Cardiac septum (tissue), 1 donor: ENCODE measurements at regions of chr10 and their contacts with region 1.

Region 1: DNA sequence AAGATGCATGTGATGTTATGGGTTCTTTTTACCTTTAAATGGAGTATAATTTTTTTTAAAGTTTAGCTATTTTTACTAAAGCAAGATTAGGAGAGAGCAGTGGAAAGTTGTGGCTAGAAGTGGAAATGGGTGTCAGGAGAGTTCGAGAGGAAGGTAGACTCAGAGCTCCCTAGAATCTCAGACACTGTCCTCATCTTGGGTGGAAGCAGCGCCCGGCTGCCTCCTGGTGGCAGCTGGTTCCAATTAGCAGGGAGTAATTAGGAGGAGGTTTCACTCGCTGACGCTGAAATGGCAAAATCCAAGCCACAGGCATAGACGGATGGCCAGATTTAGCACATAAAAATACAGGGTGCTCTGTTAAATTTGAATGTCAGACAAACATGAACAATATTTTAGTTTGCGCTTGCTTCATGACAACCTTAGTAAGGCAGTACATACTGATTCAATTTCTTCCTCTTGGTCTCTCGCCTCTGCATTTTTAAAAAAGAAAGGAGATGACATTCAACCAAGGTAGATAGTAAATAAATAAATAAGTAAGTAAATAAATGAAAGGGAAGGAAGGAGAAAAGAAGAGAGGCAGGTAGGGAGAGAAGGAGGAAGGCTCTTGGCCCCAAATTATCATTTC is 58.5 kb downstream of the LGI1 start:
- DNase-seq: no peak

Region 2: DNA sequence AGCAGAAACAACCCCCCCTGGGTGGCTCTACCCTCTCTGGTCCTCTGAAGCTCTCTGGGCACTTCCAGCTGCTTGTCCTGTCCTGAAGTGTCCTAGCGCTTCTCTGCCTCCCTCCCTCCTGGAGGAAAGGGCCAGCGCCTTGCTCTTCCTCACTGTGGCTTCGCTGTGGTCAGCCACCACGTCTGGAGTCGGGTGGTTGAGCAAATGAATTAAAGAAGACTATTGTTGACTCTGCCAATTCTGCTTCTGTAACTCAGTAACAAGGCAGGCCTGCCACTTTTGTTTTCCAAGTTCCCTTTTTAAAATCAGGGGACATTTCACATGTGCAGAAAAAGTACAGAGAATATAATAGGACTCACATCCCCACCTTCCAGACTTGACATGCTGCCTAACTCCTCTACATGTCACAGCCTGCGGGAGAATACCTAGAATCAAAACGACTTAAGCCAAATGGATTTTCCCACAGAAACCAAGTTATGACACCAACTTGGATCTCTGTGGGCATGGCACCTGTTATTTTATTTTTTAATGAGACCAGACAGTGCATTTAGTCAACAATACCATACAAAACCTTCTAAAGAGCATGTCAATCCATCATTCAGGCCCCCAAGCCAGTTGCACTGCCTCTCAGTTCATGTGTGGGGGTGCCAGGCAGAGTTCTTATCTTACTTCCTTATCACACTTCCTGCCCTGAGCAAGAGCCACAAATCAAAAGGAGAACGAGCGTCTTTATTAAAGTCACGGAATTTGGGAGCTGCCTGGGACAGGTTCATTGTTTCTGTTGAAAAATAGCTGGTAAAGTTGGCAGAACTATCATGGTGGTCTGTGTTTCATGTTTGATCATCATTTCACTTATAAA is 243.0 kb before region 1 on chr10:
- intact Hi-C with region 1: no loop called
- DNase-seq: no peak

Region 3: DNA sequence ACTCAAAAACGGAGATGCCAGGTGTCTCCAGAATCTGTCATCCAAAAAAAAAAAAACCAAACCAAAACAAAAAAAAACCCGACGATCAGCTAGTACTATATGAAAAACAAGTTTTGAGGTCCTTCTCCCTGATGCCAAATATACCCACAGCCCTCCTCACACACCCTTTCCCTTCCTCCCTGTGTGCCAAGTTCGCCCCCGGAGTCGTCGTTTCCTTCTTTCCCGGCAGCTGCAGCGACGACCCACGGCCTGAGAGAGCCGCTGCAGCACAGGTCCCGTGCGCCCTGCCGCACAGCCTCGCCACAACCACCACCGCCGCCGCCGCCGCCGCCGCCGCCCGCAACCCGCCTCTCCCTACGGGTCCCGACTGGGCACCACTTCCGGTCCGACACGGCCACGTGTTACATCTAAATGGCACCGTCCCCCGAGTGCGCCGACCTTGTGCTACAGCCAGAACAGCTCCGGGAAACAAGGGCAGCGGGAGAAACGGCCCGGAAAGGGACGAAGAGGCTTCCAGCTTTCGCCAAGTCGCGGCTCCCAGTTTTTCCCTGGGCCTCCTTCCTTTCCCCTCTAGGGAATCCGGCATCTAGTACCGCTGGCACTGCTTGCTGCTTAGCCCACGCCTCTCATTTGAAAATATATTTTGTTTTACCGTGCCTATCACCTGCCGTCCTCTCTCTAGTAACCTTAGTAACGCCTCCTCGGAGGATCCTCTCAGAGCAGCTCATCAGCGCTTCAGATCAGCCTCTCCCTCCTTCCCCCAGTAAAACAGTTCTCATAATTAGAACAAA is 113.8 kb before region 1 on chr10 and contains the start of gene FRA10AC1:
- intact Hi-C with region 1: loop called (anchors 10 kb)
- DNase-seq: peak; percentile 96
- total RNA-seq, gene FRA10AC1: 21.1 TPM

Region 4: DNA sequence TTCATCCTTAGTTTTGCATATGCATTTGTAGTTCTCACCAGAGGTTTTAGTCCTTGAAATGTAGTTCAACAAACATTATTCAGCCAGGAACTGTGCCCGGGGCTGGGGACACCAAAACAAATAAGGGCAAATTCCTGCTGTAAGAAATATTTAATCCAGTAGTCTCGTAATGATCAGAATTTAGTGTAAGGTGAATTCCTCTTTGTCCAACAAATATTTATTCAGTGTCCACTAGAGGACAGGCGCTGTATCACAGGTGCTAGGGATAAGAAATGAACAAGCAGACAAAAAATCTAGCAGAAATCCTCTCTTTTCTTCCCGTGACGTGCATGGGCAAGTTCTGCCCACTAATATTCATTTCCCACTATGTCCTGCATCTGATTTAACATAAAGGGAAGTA is 40.9 kb before region 1 on chr10:
- intact Hi-C with region 1: no loop called
- DNase-seq: no peak

Region 5: DNA sequence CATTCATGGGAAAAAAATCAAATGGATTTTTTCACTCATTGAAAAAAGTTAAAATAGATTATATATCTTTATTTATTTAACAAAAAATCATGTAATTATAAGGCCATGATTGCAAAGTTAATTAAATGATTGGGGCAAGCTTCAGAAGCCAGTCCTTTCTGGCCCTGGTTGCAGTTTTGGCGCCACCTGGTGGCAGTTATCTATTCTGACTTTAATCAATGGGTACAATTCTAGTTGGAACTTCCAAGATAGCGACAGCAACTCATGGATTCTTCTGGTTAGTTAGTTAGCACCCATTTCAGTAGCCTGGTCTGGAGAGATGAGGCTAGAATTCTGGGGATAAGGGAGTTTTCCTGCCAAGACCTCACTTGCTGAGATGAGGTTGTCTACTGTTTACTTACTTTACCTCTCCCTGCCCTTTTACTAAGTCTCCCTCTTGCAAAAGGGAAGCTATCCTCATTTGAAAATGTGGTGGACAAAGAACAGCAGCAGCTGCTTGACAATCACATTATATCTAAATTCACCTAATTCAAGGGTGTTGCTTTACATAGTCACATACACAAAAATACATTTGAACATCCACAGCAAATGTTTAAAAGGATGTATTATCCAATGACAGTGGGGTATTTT is 504.2 kb after region 1 on chr10:
- intact Hi-C with region 1: loop called (anchors 5 kb)
- DNase-seq: no peak